Activated B cell treated with CpG ODN at 0.5 μM for 24 hours (primary cell): ENCODE measurements at regions of chr15 and their contacts with region 1.

Region 1: GRCh38 chr15:76057332-76058000 is 2.3 kb upstream of the TMEM266 start:
- DNase-seq: no peak
- ATAC-seq: peak; percentile 62
- H3K4me3 Mint-ChIP-seq: peak overlapping the region; percentile 61
- H3K27ac Mint-ChIP-seq: peak overlapping the region; percentile 82
- H3K4me1 Mint-ChIP-seq: peaks cover 46% of the 10 kb centered on the region
- H3K27me3 Mint-ChIP-seq: peaks cover 10% of the 10 kb centered on the region
- CTCF ChIP-seq: no peak

Region 2: DNA sequence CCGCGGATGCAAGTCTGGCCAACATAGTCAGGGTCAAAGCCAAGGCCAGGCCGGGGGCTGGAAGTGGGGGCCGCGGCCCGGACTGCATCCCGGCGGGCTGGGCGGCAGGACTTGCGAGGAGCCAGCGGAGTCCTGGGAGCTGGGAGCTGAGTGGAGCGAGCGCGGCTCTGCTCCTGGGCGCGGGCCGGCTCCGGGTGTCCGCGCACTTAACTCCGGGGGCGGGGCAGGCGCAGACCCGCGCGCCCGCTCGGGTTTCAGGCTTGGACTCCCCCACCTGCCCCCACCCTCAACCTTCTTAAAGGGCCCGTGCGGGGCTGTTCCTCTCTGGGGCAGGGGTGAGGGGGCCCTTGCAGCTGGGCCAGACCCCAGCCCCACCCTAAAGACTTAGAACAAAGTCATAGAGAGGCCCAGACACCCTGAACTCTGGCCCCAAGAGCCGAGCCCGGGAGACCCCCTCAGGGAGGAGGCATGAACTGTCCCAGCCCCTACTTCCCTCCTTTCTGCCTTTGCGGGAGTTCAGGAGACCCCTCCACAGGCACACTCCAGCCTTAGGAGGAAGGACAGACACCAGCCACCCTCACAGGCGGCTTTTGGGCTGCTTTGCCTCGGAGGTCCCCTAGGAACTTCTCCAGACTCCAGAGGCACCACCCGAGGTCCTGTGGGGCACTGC is 344.7 kb before region 1 on chr15 and contains the start of gene CSPG4:
- CTCF ChIA-PET with region 1: no interaction called
- POLR2A ChIA-PET with region 1: no interaction called
- intact Hi-C with region 1: no loop called
- DNase-seq: no peak
- ATAC-seq: no peak
- H3K4me3 Mint-ChIP-seq: no peak within 1 kb of the TSS
- H3K27ac Mint-ChIP-seq: no peak within 1 kb of the TSS
- H3K4me1 Mint-ChIP-seq: peaks cover 2% of the 10 kb centered on the region
- H3K27me3 Mint-ChIP-seq: peaks cover 15% of the 10 kb centered on the region
- CTCF ChIP-seq: no peak
- total RNA-seq, gene CSPG4: not detected in 2 replicates

Region 3: GRCh38 chr15:75738647-75739331 is 318.7 kb before region 1 on chr15:
- CTCF ChIA-PET with region 1: no interaction called
- POLR2A ChIA-PET with region 1: no interaction called
- intact Hi-C with region 1: loop called (anchors 10 kb)
- DNase-seq: peak; percentile 95
- ATAC-seq: peak; percentile 98
- H3K4me3 Mint-ChIP-seq: peak overlapping the region; percentile 82
- H3K27ac Mint-ChIP-seq: peak overlapping the region; percentile 65
- H3K4me1 Mint-ChIP-seq: peaks cover 15% of the 10 kb centered on the region
- H3K27me3 Mint-ChIP-seq: peaks cover 7% of the 10 kb centered on the region
- CTCF ChIP-seq: no peak

Region 4: DNA sequence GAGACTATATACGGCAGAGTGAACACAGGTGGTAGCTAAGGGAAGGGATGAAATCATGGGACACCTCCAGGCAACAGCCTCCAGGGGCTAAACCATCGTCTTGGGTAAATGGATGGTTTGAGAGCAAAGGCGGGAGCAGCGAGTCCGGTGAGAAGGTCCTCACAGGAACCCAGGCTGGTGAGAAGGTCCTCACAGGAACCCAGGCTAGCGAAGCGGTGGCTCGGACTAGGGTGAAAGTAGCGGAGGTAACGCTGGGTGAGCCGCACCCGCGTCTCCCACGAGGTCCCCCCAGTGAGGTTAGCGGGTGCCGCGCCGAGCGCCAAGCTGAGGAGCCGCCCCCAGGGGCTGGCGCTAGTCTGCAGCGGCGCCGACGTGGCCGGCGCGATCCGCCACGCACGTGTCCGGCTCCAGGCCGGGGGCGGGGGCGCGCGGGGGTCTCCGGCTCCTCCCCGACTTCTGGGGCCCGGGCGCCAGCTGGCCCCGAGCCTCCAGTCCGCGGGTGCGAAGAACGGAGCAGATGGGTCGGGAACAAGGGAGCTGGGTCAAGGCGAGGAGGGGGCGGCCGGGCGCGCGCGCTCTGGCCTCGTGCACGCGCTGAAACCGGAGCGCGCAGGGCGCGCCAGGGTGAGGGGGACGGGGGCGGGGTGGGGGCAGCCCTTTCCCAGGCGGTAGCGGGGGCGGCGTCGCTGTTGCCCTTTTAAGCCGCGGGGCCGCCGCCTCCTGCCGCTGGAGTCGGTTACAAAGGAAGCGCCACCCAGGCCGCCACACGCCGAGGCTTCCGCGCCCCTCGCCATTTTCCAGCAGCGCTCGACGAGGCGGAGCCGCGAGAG is 214.5 kb before region 1 on chr15 and contains the start of gene UBE2Q2:
- CTCF ChIA-PET with region 1: no interaction called
- POLR2A ChIA-PET with region 1: no interaction called
- intact Hi-C with region 1: loop called (anchors 2 kb)
- DNase-seq: peak; percentile 65
- ATAC-seq: peak; percentile 62
- H3K4me3 Mint-ChIP-seq: peak within 1 kb of the TSS; percentile 94
- H3K27ac Mint-ChIP-seq: peak within 1 kb of the TSS; percentile 93
- H3K4me1 Mint-ChIP-seq: peaks cover 35% of the 10 kb centered on the region
- H3K27me3 Mint-ChIP-seq: no peaks in the 10 kb centered on the region
- CTCF ChIP-seq: no peak
- total RNA-seq, gene UBE2Q2: 16.9 and 23.2 TPM in 2 replicates

Region 5: DNA sequence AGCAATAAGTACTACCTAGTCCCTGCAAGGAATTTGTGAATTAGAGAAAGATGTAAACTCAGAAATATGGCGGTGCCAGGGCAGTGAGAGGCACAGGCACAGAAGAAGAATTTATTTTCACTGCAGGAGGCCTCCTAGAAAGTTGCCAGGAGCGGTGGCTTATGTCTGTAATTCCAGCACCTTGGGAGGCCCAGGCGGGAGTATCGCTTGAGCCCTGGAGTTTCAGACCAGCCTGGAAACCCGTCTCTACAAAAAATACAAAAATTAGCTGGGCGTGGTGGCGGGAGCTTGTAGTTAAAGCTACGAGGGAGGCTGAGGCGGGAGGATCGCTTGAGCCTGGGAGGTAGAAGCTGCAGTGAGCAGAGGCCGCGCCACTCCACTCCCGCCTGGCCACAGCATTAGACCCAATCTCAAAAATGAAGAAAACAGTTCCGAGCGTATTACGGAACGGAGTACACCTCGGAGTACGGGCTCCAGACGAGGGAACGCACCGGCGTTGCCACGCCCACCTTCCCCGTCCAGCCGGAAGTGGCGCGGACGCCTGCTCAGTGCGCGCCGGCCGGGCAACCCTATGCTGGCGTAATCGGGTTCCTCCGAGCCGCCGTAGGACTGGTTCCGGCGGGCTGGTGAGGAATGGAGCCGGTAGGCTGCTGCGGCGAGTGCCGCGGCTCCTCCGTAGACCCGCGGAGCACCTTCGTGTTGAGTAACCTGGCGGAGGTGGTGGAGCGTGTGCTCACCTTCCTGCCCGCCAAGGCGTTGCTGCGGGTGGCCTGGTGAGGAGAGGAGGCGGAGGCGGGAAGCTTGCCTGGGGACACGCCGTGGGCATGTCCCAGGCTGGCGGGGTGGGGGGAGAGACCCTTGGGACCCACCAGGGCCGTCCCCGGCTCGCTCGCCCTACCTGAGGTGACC is 153.9 kb before region 1 on chr15 and contains the start of gene FBXO22:
- CTCF ChIA-PET with region 1: no interaction called
- POLR2A ChIA-PET with region 1: interaction called, 3 read pairs
- intact Hi-C with region 1: loop called (anchors 1 kb)
- DNase-seq: peak; percentile 84
- ATAC-seq: peak; percentile 95
- H3K4me3 Mint-ChIP-seq: peak within 1 kb of the TSS; percentile 99
- H3K27ac Mint-ChIP-seq: peak within 1 kb of the TSS; percentile 96
- H3K4me1 Mint-ChIP-seq: peaks cover 26% of the 10 kb centered on the region
- H3K27me3 Mint-ChIP-seq: no peaks in the 10 kb centered on the region
- CTCF ChIP-seq: no peak
- total RNA-seq, gene FBXO22: 19.6 and 24.4 TPM in 2 replicates

Region 6: GRCh38 chr15:76150971-76151598 is 93.6 kb after region 1 on chr15:
- CTCF ChIA-PET with region 1: interaction called, 4 read pairs
- POLR2A ChIA-PET with region 1: interaction called, 3 read pairs
- intact Hi-C with region 1: loop called (anchors 1 kb)
- DNase-seq: peak; percentile 75
- ATAC-seq: peak; percentile 95
- H3K4me3 Mint-ChIP-seq: no peak overlapping the region
- H3K27ac Mint-ChIP-seq: peak overlapping the region; percentile 41
- H3K4me1 Mint-ChIP-seq: peaks cover 18% of the 10 kb centered on the region
- H3K27me3 Mint-ChIP-seq: peaks cover 6% of the 10 kb centered on the region
- CTCF ChIP-seq: peak; percentile 41